Posterior vena cava (tissue), 2 donors: ENCODE measurements at regions of chr9 and their contacts with region 1.

Region 1: DNA sequence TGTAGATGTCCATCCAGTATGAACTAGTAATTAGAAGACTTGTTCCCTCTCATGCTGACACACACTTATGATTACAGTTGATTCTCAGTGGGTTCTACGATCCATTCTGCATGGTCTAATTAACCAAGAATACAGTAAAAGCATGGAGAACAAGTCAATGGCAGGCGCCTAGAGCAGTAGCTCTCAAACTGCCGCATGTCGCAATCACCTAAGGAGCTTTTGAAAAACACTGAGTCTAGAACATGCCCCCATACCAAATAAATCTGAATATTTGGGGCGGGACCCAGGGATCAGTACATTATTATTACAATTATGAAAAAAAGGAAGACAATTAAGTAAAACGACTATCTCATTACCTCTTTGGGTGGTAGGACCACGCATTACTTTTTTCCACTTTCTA is 26.7 kb upstream of the CEP78 start:
- DNase-seq: no peak

Region 2: GRCh38 chr9:78221425-78221824 is 12.3 kb after region 1 on chr9:
- intact Hi-C with region 1: loop called in 1 of 2 experiments (anchors 1 kb)
- DNase-seq: no peak